MCF 10A (cell line): ENCODE measurements at regions of chr1 and their contacts with region 1.

Region 1: GRCh38 chr1:151459331-151460046 is at the start of gene POGZ:
- DNase-seq: peak; percentile 97
- H3K4me3 Mint-ChIP-seq: peak within 1 kb of the TSS; percentile 77
- H3K27ac Mint-ChIP-seq: peak within 1 kb of the TSS; percentile 90
- H3K4me1 Mint-ChIP-seq: peaks cover 4% of the 10 kb centered on the region
- H3K27me3 Mint-ChIP-seq: peaks cover 13% of the 10 kb centered on the region
- CTCF ChIP-seq: no peak
- total RNA-seq, gene POGZ: 92.1 and 92.2 TPM in 2 replicates

Region 2: DNA sequence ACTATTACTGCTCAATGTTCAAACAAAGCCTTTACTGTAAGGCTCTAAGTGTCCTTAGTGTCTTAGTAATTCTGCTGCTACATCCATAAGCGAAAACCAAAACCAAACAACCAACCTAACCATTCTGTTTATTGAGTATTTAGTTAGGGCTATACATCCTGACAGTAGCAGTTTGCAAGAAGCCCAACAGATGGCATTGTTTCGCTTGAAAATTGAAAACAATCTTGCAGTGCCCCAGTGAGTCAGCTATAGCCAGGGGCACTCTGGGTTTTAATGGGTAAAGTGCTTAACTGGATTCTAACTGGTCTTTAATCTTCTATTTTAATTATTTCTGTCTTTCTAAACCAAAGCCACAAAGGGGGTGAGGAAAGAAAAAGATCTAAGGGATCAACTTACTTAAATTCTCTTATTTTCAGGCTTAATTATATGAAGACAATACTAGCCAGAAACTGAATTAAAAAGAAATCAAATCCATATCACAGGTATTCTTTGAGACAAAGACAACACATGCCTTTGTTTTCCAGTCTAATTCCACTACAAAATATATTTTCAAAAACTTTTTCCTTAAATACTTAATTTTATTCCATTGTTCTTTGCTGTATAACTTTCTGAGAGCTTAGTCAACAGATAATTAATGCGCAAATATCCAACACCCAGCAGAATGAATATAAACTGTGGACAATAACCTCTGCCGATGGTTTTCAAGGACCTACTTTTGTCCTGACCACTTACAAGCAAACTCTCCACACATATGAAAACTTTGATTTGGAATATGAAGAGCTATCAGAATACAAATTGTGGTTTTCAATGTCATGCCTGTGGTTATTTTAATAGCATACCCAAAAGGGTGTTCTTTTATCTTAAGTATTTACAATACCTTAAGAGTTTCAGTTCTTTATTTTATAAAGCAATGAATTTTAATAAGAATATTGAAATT is 15.4 kb before region 1 on chr1:
- CTCF ChIA-PET with region 1: interaction called, 15 read pairs
- POLR2A ChIA-PET with region 1: interaction called, 6 read pairs
- intact Hi-C with region 1: no loop called
- DNase-seq: peak; percentile 94
- H3K4me3 Mint-ChIP-seq: no peak overlapping the region
- H3K27ac Mint-ChIP-seq: no peak overlapping the region
- H3K4me1 Mint-ChIP-seq: peaks cover 24% of the 10 kb centered on the region
- H3K27me3 Mint-ChIP-seq: no peaks in the 10 kb centered on the region
- CTCF ChIP-seq: peak; percentile 93

Region 3: GRCh38 chr1:151472856-151473731 is 13.6 kb after region 1 on chr1:
- CTCF ChIA-PET with region 1: interaction called, 9 read pairs
- POLR2A ChIA-PET with region 1: interaction called, 30 read pairs
- intact Hi-C with region 1: loop called (anchors 1 kb)
- DNase-seq: no peak
- H3K4me3 Mint-ChIP-seq: no peak overlapping the region
- H3K27ac Mint-ChIP-seq: no peak overlapping the region
- H3K4me1 Mint-ChIP-seq: no peaks in the 10 kb centered on the region
- H3K27me3 Mint-ChIP-seq: no peaks in the 10 kb centered on the region
- CTCF ChIP-seq: no peak

Region 4: DNA sequence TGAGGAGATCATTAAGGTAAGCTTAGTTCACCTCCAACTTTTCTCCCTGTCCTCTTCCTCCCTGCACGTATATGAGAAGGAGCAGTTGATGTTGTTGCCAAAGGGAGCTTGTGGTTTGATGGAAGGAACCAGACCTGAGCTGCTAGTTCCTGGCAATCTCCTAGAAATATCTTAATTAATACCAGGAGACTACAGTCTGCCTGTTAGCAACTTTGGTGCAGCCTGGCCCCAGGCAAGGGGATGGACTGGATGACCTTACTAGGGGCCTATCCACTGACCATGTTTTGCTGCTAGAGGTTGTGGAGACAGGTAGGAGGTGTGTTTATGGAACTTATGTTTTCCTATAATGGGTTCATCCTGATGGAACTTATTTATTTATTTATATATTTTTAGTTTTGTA is 103.2 kb after region 1 on chr1:
- CTCF ChIA-PET with region 1: no interaction called
- POLR2A ChIA-PET with region 1: no interaction called
- intact Hi-C with region 1: no loop called
- DNase-seq: no peak
- H3K4me3 Mint-ChIP-seq: no peak overlapping the region
- H3K27ac Mint-ChIP-seq: peak overlapping the region; percentile 32
- H3K4me1 Mint-ChIP-seq: peaks cover 6% of the 10 kb centered on the region
- H3K27me3 Mint-ChIP-seq: no peaks in the 10 kb centered on the region
- CTCF ChIP-seq: no peak